Heart left ventricle (tissue), 16 donors: ENCODE measurements at regions of chr1 and their contacts with region 1.

Region 1: DNA sequence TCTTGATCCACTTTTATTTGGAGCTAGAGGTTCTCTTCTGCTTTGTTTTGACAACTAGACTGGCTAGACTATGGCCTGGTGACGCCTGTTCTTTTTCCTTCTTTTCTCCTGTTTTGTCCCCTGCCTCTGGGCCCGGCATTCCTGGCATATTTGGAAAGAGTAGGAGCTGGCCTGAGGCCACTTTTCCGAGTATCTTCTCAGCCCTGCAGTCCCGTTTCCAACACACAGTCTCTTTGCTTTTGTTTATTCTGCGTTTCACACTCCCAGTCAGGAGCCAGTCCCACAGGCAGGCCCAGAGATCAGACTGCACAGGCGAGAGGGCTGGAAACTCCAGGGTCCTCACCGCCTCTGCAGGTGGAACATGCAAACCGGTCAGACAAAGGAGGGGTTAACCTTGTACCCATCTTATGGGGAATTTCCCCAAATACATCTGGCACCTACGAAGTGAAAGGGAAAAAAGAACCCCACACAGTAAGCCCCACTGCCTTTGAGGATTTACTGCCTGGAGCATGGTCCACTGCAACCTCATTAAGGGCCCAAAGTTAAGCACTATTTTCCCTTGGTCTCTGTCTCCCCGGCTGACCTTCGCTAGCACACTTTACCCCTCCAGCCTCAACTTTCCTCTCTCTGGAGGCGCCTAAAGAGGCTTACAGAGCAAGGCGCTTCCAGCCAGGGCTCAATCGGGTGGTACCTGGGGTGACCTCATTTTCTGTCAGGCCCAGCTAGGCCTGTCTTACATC is 141.1 kb downstream of the TOMM20 start:
- DNase-seq: peak in 4 of 5 donors; percentile 65 to 76 (median 76)
- ATAC-seq: peak; percentile 81 to 92 (median 88)
- H3K4me3 ChIP-seq: no peak overlapping the region
- H3K27ac ChIP-seq: peak overlapping the region; percentile 79 to 98 (median 90)
- H3K4me1 ChIP-seq: peaks cover 15 to 66% (median 35%) of the 10 kb centered on the region in 12 donors
- H3K27me3 ChIP-seq: no peaks in the 10 kb centered on the region
- CTCF ChIP-seq: no peak
- POLR2A ChIP-seq: no peak

Region 2: DNA sequence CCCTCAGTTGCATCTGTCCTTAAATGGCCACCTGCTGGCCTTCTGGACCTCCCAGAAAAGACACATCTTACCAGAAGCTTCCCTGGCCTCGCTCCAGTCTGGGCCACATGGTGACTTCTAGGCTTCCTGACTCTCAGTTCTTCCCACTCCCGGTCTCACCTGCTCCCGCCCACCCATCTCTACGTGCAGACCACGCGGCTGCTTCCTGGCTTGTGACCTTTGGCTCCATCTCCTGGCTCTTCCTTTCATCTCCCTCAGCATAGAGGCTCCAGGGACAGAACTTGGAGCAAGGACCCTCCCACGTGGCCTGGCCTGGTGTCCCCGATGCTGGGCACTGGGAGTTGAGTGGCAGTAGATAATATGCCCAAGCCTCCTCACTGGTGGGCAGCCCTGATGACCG is 252.7 kb before region 1 on chr1:
- intact Hi-C with region 1: no loop called
- DNase-seq: no peak
- ATAC-seq: no peak
- H3K4me3 ChIP-seq: no peak overlapping the region
- H3K27ac ChIP-seq: no peak overlapping the region
- H3K4me1 ChIP-seq: peaks cover 0 to 23% (median 0%) of the 10 kb centered on the region in 12 donors
- H3K27me3 ChIP-seq: no peaks in the 10 kb centered on the region
- CTCF ChIP-seq: no peak
- POLR2A ChIP-seq: no peak

Region 3: GRCh38 chr1:234931404-234931973 is 56.1 kb before region 1 on chr1:
- intact Hi-C with region 1: no loop called
- DNase-seq: no peak
- ATAC-seq: no peak
- H3K4me3 ChIP-seq: no peak overlapping the region
- H3K27ac ChIP-seq: no peak overlapping the region
- H3K4me1 ChIP-seq: peaks cover 0 to 53% (median 18%) of the 10 kb centered on the region in 12 donors
- H3K27me3 ChIP-seq: no peaks in the 10 kb centered on the region
- CTCF ChIP-seq: no peak
- POLR2A ChIP-seq: no peak

Region 4: DNA sequence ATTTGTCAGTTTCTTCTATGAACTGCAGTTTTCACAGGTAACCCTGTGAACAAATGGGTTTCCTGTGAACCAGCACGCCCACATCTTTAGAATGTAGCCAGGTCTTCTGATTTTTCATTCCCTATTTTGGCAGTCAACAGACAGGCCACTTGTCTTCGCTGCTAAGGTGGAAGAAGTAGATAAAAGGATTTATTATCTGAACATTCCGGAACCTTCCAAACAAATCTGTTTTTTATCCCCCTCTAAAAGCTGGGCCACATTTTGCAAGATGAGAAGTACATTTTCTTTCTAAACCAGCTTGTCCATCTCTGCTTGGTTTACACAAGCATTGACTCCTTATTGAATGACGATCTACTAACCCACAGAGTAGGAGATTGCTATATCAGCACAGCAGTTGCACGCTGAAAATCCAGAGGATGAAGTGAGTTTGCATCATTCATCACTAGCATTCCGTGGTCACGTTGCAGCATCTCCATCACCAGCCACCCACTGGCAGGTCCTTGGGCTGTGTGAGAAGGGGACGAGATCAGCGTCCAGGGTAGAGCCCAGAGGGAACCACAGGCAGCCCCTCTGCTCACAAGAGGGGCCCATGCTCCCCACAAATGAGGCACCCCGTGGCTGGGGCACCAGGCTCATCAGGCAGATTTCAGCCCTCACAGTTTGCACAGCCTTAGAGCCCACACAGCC is 57.6 kb after region 1 on chr1:
- intact Hi-C with region 1: loop called in 2 of 10 experiments (anchors 5 to 10 kb)
- DNase-seq: no peak
- ATAC-seq: no peak
- H3K4me3 ChIP-seq: no peak overlapping the region
- H3K27ac ChIP-seq: peak overlapping the region in 1 of 12 donors; percentile 89
- H3K4me1 ChIP-seq: peaks cover 5 to 50% (median 21%) of the 10 kb centered on the region in 12 donors
- H3K27me3 ChIP-seq: no peaks in the 10 kb centered on the region
- CTCF ChIP-seq: no peak
- POLR2A ChIP-seq: no peak